ENCODE measurements at regions of chr3 and their contacts with region 1.

Region 1: GRCh38 chr3:72629191-72629631 is 219.0 kb downstream of the SHQ1 start:
- DNase-seq: no peak
- H3K4me3 Mint-ChIP-seq: peak overlapping the region; percentile 1
- H3K27ac Mint-ChIP-seq: peak overlapping the region; percentile 89
- H3K4me1 Mint-ChIP-seq: peaks cover 64% of the 10 kb centered on the region
- H3K27me3 Mint-ChIP-seq: peaks cover 3% of the 10 kb centered on the region

Region 2: GRCh38 chr3:71875461-71875947 is 753.7 kb before region 1 on chr3:
- intact Hi-C with region 1: loop called (anchors 2 kb)
- DNase-seq: peak; percentile 67
- H3K4me3 Mint-ChIP-seq: no peak overlapping the region
- H3K27ac Mint-ChIP-seq: peak overlapping the region; percentile 59
- H3K4me1 Mint-ChIP-seq: peaks cover 38% of the 10 kb centered on the region
- H3K27me3 Mint-ChIP-seq: peaks cover 8% of the 10 kb centered on the region

Region 3: DNA sequence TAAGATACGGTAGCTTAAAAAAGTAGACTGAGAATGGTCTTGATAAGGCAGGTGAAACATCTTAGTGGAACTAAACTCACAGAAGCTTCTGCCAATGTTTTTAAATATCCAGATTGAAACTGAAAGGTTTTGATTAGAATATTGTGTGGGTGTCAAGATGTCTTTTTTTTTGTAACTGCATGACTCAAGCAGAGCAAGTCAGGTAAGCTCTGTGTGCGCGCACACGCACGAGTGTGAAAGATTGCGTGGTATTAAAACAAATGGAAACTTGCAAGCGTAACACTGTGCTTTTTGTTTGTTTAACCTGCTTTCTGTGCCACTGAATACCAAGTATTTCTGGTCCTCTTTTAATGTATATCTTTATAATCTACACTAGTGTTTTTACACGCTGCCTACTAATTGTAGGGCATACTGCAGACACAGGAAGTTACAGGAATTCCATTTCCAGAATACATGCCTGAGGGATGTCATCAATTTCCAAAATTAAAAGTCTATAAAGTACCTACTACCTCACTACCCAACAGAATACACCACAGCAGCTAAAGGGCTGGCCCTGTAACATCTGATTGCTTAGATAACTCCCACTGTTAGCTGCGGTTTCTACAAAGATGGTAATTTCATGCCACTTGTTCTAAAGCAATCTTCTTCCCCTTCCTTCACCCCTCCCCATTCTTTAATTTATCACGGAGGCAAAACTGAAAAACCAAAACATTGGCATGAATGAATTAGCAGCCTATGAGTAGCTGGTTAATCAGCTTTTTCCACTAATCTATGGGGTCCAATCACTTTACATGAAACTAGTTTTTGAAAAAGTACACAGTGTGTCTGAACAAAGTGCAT is 253.8 kb before region 1 on chr3:
- intact Hi-C with region 1: loop called (anchors 1 kb)
- DNase-seq: no peak
- H3K4me3 Mint-ChIP-seq: peak overlapping the region; percentile 32
- H3K27ac Mint-ChIP-seq: peak overlapping the region; percentile 92
- H3K4me1 Mint-ChIP-seq: peaks cover 48% of the 10 kb centered on the region
- H3K27me3 Mint-ChIP-seq: no peaks in the 10 kb centered on the region

Region 4: GRCh38 chr3:72447059-72447946 is 181.9 kb before region 1 on chr3:
- intact Hi-C with region 1: loop called (anchors 1 kb)
- DNase-seq: peak; percentile 93
- H3K4me3 Mint-ChIP-seq: peak overlapping the region; percentile 71
- H3K27ac Mint-ChIP-seq: peak overlapping the region; percentile 80
- H3K4me1 Mint-ChIP-seq: peaks cover 50% of the 10 kb centered on the region
- H3K27me3 Mint-ChIP-seq: peaks cover 1% of the 10 kb centered on the region

Region 5: GRCh38 chr3:72538070-72538745 is 91.0 kb before region 1 on chr3:
- intact Hi-C with region 1: loop called (anchors 2 kb)
- DNase-seq: no peak
- H3K4me3 Mint-ChIP-seq: no peak overlapping the region
- H3K27ac Mint-ChIP-seq: peak overlapping the region; percentile 36
- H3K4me1 Mint-ChIP-seq: peaks cover 45% of the 10 kb centered on the region
- H3K27me3 Mint-ChIP-seq: peaks cover 3% of the 10 kb centered on the region

Region 6: DNA sequence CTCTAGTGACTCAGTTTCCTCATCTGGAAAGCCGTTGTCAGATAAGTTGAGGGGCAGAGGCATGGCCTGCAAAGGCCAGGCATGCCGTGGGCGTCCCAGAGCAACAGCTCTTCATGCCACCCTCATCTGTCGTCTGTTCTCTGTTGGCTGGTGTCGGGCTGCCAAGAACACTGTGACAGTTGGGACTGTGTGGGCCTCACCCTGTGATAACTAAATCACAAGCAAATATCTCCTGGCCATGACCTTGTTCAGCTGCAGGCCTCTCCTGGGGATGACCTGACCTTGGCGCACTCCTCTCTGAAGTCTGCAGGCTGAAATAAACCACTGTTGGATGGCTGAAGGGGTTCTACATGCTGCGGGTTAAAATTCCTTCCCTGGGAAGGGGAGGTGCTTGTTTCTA is 73.2 kb after region 1 on chr3:
- intact Hi-C with region 1: no loop called
- DNase-seq: no peak
- H3K4me3 Mint-ChIP-seq: no peak overlapping the region
- H3K27ac Mint-ChIP-seq: no peak overlapping the region
- H3K4me1 Mint-ChIP-seq: no peaks in the 10 kb centered on the region
- H3K27me3 Mint-ChIP-seq: no peaks in the 10 kb centered on the region

Region 7: DNA sequence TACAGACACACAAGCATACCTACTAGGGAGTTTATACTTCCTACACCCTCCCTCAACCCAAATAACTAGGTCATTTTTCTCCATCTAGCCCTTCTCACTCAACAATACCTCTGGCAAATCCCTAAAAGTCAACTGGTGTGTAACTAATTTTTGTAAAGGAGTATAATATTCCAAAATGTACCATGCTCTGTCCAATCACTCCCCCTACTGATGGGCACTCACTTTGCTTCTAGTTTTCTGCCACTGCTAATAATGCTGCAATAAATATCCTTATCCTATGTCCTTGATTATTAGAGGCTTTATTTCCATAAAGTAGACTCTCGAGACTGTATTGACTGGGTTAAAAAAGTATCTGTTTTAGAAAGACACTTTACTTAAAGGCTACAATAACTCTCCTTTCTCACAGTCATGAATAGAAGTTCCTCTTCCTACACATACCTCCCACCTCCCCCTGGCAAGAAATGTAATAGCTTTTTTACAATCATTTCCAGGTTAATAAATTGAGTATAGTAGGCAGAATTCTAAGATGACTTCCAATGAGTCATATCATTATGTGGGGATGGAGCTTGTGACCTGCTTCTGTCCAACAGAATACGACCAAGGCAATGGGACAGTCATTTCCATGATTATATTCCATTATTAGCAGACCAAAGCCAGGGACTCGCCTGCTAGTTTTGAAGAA is 189.0 kb after region 1 on chr3:
- intact Hi-C with region 1: loop called (anchors 1 kb)
- DNase-seq: no peak
- H3K4me3 Mint-ChIP-seq: no peak overlapping the region
- H3K27ac Mint-ChIP-seq: no peak overlapping the region
- H3K4me1 Mint-ChIP-seq: peaks cover 36% of the 10 kb centered on the region
- H3K27me3 Mint-ChIP-seq: no peaks in the 10 kb centered on the region

Measured in activated T-helper 1 cell treated with anti-CD3 and anti-CD28 coated beads, Interleukin-12 subunit alpha, Interleukin-12 subunit beta, Interleukin-2, Interleukin-4 antibody, amounts not matched to agents 30 ng/mL and 10 ng/mL and 1 ng/mL, durations not matched to agents 14 hours and 24 hours and 36 hours (primary cell).